HEK293T (cell line): ENCODE measurements at regions of chr1 and their contacts with region 1.

Region 1: DNA sequence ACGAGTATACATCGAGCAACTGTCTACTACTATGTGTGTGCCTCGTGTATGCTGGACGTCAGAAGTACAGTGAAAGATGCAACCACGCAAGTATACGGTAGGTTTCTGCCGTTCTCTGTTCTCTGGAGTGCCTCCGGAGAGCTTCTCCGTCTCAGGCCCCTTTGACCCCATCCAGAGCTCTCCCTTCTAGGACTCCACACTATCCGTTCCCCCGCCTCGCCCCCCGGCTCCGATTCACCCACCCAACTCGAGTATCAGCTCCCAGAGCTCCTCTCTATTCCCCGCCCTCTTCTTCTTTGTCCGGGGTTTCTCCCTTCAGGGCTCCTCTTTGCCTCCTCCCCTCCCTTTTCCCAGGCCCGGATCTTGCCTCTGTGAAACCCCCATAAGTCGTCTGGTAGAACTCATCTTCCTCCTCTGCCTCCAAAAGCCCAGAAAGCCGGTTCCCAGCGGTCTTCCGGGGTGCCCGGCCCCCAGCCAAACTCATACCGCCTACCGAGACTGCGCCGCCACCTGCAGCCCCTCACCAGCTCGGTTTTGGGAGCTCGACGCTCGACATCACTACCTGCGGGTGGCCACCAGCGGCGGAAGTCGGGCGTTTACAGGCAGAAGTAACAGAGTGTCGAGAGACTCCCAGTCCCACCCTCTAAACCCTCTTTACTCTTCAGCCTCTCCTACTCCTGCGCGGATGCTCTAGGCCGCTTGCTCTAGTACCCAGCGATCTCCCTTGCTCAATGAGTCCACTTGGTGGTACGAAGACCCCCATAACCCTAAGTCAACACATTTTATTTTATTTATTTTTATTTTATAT is at the start of gene VPS72:
- DNase-seq: peak; percentile 93

Region 2: DNA sequence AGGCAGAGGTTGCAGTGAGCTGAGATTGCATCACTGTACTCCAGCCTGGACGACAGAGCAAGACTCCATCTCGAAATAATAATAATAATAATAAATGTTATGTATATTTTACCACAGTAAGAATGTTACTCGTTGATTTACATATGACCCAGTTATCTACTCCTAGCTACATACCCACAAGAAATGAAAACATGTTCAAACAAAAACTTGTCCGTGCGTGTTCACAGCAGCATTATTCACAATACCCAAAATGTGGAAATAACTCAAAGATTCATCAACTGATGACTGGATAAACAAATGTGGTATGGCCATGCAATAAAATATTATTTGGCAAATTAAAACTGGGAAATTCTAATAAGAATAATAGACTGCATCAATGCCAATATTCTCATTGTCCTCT is 528.7 kb before region 1 on chr1:
- CTCF ChIA-PET with region 1: no interaction called
- POLR2A ChIA-PET with region 1: no interaction called
- DNase-seq: no peak

Region 3: DNA sequence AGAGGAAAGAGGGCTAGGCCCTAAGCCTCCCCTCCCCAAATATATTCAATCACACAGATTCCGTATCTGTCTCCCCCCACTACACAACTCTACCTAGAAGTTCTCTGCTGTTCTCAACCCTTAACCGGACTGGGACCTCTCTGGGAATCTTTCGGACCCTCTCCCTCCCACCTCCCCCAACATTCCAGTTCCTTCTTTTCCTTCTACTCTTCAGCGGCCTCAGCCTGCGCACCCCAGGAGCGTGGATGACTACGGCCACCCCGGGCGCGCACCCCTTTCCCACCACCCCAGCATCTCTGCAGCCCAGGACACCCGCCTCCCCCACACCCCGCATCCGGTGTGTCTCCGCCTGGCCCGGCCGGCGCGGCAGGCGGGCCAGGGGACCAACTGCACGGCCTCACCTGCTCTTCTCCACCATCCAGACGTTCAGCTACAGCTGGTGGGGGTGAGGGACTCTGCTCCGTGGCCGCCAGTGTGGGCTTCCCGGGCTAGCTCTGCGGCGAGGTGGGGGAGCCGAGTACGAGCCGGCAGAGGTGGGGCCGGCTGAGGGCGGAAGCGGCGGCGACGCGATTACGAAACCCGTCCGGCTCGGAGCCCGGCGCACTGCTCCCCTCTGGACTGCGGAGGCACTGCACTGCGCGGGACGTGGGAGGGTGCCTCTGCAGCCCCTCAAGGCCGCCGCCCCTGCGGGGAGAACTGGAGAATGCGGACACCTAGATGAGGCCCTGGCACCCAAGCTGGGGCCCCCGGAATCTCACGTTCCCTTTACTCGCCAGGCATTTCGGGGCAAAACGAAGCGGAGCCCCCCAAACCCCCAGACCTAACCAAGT is 130.5 kb before region 1 on chr1 and contains the start of gene CDC42SE1:
- CTCF ChIA-PET with region 1: interaction called, 11 read pairs
- POLR2A ChIA-PET with region 1: interaction called, 5 read pairs
- DNase-seq: peak; percentile 93

Region 4: DNA sequence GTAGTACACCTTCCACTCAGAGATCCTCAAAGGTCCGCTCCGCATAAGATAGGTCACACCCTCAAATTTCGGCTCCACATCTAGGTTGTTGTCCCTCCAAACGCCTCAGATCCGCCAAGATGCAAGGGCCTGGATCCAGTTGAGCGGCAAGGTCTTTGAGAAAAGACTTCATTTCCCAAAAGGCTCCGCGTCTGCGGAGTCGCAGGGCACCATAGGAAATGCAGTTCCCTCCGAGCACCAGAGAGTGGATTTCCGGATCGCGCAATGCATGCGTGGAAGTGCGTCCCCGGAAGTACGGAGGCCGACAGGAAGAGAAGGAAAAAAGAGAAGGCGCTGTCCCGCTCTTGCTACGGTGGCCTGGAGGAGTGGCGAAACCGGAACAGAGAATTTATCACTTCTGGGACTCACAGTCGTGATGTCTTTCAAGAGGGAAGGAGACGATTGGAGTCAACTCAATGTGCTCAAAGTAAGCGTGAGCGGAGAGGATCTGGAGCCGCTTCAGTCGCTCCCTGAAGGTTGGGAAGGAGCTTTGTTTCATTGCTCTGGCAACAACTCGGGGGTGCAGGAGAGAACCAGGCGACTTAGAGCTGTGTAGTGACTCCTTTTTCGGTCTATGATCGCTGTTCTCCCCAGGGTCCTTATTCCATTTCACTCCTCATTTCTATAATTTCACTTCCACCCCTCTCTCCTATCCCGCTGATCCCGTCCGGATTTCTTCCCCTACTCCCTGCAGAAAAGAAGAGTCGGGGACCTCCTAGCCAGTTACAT is 23.9 kb before region 1 on chr1 and contains the starts of genes LYSMD1 and SCNM1:
- CTCF ChIA-PET with region 1: no interaction called
- POLR2A ChIA-PET with region 1: interaction called, 17 read pairs
- DNase-seq: peak; percentile 98

Region 5: DNA sequence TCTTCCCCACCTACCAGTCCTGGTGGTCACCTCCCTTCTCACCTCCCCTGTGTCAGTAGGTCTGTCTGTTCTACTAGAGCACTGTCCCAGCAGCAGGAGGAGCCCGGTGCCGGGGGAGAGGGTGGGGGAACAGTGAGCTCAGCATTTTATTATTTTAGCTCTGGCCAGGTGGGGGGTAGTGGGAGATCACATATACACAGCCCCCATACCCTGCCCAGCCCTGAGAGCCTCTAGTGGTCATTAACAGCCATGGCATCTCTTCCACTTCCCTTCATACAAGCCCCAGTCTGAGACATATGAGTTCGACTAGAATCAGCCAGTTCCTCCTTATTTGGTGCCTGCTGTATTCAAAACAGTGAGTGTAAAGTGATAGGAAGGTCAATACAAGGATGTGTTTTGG is 13.9 kb before region 1 on chr1 and contains the start of gene TMOD4:
- CTCF ChIA-PET with region 1: no interaction called
- POLR2A ChIA-PET with region 1: interaction called, 40 read pairs
- DNase-seq: peak; percentile 72

Region 6: DNA sequence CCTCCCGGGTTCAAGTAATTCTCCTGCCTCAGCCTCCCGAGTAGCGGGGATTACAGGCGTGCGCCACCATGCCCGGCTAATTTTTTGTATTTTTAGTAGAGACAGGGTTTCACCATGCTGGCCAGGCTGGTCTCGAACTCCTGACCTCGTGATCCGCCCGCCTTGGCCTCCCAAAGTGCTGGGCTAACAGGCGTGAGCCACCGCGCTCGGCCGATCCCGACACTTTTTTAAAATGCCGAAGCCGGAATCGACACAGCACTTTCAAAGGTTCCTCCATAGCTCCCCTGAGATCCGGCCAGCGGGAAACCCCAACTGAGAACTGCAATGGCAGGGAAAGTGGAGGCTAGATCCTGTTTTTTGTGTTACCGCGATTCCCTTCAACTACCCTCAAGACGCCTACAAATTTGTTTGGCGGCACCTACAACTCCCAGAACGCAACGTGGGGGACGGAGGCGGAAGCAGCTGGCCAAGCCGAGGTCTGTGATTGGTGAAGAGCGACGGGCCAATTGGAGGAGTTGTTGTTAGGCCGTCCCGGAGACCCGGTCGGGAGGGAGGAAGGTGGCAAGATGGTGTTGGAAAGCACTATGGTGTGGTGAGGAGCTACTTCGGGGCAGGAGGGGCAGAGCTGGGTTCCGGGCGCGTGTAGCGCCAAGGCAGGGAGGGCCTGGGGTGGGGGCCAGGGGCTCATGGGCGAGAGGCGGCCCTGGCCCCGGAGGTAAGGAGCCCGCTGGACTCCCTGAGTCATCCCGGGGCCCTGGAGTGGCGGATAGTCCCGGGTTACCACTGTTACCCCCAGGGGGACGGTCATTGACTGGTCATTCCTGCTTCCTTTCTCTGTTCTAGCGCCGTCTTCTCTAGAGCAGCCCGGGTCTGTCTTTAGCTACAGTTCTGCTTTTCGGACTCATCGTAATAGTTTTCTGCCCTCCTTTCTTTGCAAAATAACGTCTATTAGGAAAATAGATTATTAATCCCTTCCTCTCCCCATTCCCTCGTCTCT is 64.7 kb after region 1 on chr1 and contains the start of gene PSMD4:
- CTCF ChIA-PET with region 1: interaction called, 7 read pairs
- POLR2A ChIA-PET with region 1: interaction called, 15 read pairs
- DNase-seq: peak; percentile 99

Region 7: GRCh38 chr1:151612501-151613203 is 422.8 kb after region 1 on chr1:
- CTCF ChIA-PET with region 1: no interaction called
- POLR2A ChIA-PET with region 1: no interaction called
- DNase-seq: peak; percentile 36